ENCODE measurements at regions of chr3 and their contacts with region 1.

Region 1: GRCh38 chr3:194871143-194871863 is 185.6 kb downstream of the FAM43A start:
- DNase-seq: peak; percentile 89
- ATAC-seq: peak; percentile 69
- H3K4me3 ChIP-seq: peak overlapping the region; percentile 41; the same call in 1 of the 2 replicates
- H3K27ac ChIP-seq: peak overlapping the region; percentile 96
- H3K4me1 ChIP-seq: peaks cover 51% of the 10 kb centered on the region
- H3K27me3 ChIP-seq: no peaks in the 10 kb centered on the region
- CTCF ChIP-seq: no peak; the same call in 1 of the 2 replicates

Region 2: GRCh38 chr3:194740859-194741491 is 130.3 kb before region 1 on chr3:
- CTCF ChIA-PET with region 1: interaction called, 3 read pairs
- POLR2A ChIA-PET with region 1: no interaction called
- intact Hi-C with region 1: loop called (anchors 2 kb)
- DNase-seq: peak; percentile 96
- ATAC-seq: peak; percentile 78
- H3K4me3 ChIP-seq: peak overlapping the region; percentile 35; the same call in 1 of the 2 replicates
- H3K27ac ChIP-seq: peak overlapping the region; percentile 82
- H3K4me1 ChIP-seq: peaks cover 46% of the 10 kb centered on the region
- H3K27me3 ChIP-seq: no peaks in the 10 kb centered on the region
- CTCF ChIP-seq: no peak

Region 3: GRCh38 chr3:194814878-194815357 is 56.4 kb before region 1 on chr3:
- CTCF ChIA-PET with region 1: interaction called, 3 read pairs
- POLR2A ChIA-PET with region 1: interaction called, 3 read pairs
- intact Hi-C with region 1: loop called (anchors 1 kb)
- DNase-seq: peak; percentile 41
- ATAC-seq: peak; percentile 67
- H3K4me3 ChIP-seq: no peak overlapping the region
- H3K27ac ChIP-seq: no peak overlapping the region
- H3K4me1 ChIP-seq: no peaks in the 10 kb centered on the region
- H3K27me3 ChIP-seq: no peaks in the 10 kb centered on the region
- CTCF ChIP-seq: no peak

Region 4: GRCh38 chr3:194985031-194985578 is 113.8 kb after region 1 on chr3:
- CTCF ChIA-PET with region 1: interaction called, 3 read pairs
- POLR2A ChIA-PET with region 1: no interaction called
- intact Hi-C with region 1: loop called (anchors 5 kb)
- DNase-seq: peak; percentile 86
- ATAC-seq: peak; percentile 84
- H3K4me3 ChIP-seq: peak overlapping the region; percentile 51; the same call in 1 of the 2 replicates
- H3K27ac ChIP-seq: peak overlapping the region; percentile 10; the same call in 1 of the 2 replicates
- H3K4me1 ChIP-seq: peaks cover 43% of the 10 kb centered on the region
- H3K27me3 ChIP-seq: no peaks in the 10 kb centered on the region
- CTCF ChIP-seq: peak; percentile 68

Region 5: GRCh38 chr3:195106418-195106906 is 235.2 kb after region 1 on chr3:
- CTCF ChIA-PET with region 1: interaction called, 4 read pairs
- POLR2A ChIA-PET with region 1: interaction called, 3 read pairs
- intact Hi-C with region 1: loop called (anchors 2 kb)
- DNase-seq: peak; percentile 69
- ATAC-seq: peak; percentile 49
- H3K4me3 ChIP-seq: peak overlapping the region; percentile 34; the same call in 1 of the 2 replicates
- H3K27ac ChIP-seq: peak overlapping the region; percentile 88
- H3K4me1 ChIP-seq: peaks cover 50% of the 10 kb centered on the region
- H3K27me3 ChIP-seq: no peaks in the 10 kb centered on the region
- CTCF ChIP-seq: peak; percentile 98